ENCODE measurements at regions of chrX and their contacts with region 1.

Region 1: DNA sequence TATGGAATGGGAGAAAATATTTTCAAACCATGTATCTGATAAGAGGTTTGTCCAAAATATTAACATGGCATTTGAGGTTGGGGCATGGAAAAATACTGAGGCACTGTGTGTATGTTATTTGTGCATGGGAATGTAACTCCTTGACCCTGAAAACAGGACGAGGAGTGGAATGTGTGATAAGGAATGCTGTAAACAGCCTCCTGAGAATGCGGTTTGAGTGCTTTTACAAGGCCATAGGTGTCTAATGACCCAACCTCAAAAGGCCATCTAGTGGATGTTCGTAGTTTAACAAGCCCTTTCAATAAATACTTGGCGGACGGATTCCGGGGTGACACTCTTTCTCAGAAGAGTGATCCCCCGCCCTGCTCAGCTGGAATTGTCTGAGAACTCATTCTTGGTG is 162.9 kb upstream of the USP9X start:
- DNase-seq: peak; percentile 45
- ATAC-seq: peak; percentile 41; the same call in 2 of the 3 replicates
- H3K4me3 ChIP-seq: no peak overlapping the region
- H3K27ac ChIP-seq: no peak overlapping the region
- H3K4me1 ChIP-seq: no peaks in the 10 kb centered on the region
- H3K27me3 ChIP-seq: no peaks in the 10 kb centered on the region
- CTCF ChIP-seq: peak; percentile 68
- EP300 ChIP-seq: no peak
- POLR2A ChIP-seq: no peak
- RAD21 ChIP-seq: peak; percentile 37; the same call in 1 of the 2 replicates

Region 2: GRCh38 chrX:40809210-40809609 is 113.1 kb before region 1 on chrX:
- CTCF ChIA-PET with region 1: no interaction called
- POLR2A ChIA-PET with region 1: no interaction called
- in situ Hi-C with region 1: no loop called
- intact Hi-C with region 1: loop called (anchors 10 kb)
- DNase-seq: no peak
- ATAC-seq: no peak
- H3K4me3 ChIP-seq: no peak overlapping the region
- H3K27ac ChIP-seq: no peak overlapping the region
- H3K4me1 ChIP-seq: 0 out of 2 replicates have a peak, but pooled peaks cover 15% of the 10 kb centered on the region
- H3K27me3 ChIP-seq: no peaks in the 10 kb centered on the region
- CTCF ChIP-seq: no peak
- EP300 ChIP-seq: no peak
- POLR2A ChIP-seq: no peak
- RAD21 ChIP-seq: no peak

Region 3: DNA sequence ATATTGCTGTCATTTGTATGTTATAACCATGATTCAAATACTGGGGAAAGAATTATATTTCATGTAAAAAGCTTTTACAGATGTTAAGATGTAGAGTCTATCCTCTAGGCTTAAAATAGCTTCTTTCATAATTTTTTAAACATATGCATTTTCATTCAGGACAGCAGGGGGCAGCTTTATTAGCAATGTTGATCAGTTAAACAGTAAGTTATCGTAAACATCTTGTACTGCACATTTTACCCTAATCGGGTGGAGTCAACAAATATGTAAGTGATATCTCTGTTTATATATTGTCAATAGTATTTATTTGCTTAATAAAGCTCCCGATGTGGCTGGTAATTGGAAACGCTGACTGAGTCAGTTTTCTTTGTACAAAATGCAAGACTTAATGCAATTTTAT is 44.4 kb before region 1 on chrX:
- CTCF ChIA-PET with region 1: no interaction called
- POLR2A ChIA-PET with region 1: no interaction called
- in situ Hi-C with region 1: no loop called
- intact Hi-C with region 1: loop called (anchors 10 kb)
- DNase-seq: peak; percentile 8
- ATAC-seq: no peak
- H3K4me3 ChIP-seq: no peak overlapping the region
- H3K27ac ChIP-seq: no peak overlapping the region
- H3K4me1 ChIP-seq: no peaks in the 10 kb centered on the region
- H3K27me3 ChIP-seq: no peaks in the 10 kb centered on the region
- CTCF ChIP-seq: no peak
- EP300 ChIP-seq: no peak
- POLR2A ChIP-seq: no peak
- RAD21 ChIP-seq: no peak